CD8-positive, alpha-beta T cell (primary cell): ENCODE measurements at regions of chr2 and their contacts with region 1.

Region 1: DNA sequence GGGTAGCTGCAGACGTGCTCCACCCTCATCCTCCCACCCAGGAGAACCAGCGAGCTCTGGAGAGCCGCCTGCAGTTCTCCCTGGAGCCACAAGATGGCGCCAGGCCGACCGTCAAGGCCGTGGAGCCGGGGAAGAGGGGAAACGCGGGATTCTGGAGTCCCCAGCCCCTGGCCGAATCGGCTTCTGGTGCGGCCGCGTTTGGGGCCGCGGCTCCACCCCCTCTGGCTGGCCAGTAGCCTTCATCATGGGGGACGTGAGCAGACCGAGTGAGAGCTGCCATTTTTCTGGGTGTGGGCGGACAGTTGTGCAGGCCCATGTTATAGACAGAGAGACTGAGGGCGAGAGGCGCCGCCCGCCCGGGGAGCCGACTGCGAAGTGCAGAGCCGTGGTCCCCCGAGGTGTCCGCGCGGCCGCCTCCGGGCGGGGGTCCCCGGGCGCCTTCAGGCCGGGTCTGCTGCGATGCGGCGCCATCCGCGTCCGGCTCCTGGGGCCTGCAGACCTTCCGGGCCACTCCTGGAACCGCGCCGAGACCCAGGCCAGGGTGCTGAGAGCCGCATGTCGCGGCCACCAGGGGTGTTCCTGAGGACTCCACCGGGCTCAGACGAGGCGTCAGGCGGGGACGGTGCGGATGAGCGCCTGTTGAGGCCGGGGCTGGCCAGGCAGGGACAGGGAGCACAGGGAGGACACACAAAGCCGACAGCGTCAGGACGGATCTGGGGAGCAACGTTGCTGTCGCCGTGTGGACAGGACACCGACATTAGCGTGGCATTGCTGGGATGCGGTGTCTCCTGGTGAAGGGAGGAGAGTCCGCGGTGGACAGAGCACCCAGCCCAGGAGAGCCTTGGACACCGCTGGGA is 418.2 kb upstream of the HS6ST1 start:
- DNase-seq: peak; percentile 16 to 63 (median 51)
- ATAC-seq: peak; percentile 31
- H3K4me3 ChIP-seq: no peak overlapping the region
- H3K4me3 Mint-ChIP-seq: peak overlapping the region; percentile 26
- H3K27ac ChIP-seq: no peak overlapping the region
- H3K27ac Mint-ChIP-seq: no peak overlapping the region
- H3K4me1 ChIP-seq: peaks cover 6% of the 10 kb centered on the region
- H3K4me1 Mint-ChIP-seq: peaks cover 7% of the 10 kb centered on the region
- H3K27me3 ChIP-seq: peaks cover 0 to 2% of the 10 kb centered on the region in 2 experiments
- H3K27me3 Mint-ChIP-seq: peaks cover 15% of the 10 kb centered on the region
- CTCF ChIP-seq: peak; percentile 73

Region 2: DNA sequence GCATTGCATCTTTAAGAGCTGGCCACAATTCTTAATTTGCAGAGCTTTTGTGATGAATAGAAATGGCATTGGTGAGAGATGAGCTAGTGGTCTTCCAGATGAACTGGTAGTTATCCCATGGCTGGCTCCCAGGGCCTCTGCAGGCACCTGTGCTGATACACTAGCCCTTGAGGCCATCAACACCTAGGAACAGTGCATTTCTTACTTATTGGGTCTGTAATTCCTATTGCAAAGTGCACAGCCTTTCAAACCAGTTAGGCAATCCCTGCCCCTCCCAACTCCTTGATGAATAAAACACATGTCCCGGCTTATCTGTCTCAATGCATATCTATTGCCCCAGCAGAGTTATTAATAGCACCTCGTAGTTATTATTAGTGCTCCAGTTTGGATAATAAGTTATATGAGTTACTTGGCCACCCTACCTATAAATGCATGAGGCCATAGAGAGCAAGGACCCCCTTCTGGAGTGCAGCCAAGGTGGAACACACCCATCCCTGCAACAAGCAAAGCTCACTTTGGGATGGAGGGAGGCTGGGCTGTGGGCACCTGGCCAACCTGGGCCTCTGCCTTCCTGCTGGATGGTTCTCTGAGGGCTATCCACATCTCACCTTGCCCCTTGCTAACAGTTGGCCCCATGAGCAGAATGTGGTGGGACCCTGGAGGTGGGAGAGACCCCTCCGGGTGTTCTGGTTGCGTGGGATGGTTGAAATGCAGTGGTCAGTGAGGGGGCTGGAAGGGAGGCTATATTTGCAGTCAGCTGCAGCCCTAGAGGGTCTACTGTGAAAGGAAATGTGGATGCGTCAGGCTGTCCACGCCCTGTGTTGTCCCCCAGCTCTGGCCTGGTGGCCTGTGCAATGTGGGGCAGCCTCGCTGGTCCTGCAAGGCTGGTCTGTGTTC is 37.7 kb after region 1 on chr2:
- CTCF ChIA-PET with region 1: no interaction called
- POLR2A ChIA-PET with region 1: no interaction called
- intact Hi-C with region 1: no loop called
- DNase-seq: peak in 1 of 9 experiments; percentile 29
- ATAC-seq: no peak
- H3K4me3 ChIP-seq: no peak overlapping the region
- H3K4me3 Mint-ChIP-seq: no peak overlapping the region
- H3K27ac ChIP-seq: no peak overlapping the region
- H3K27ac Mint-ChIP-seq: no peak overlapping the region
- H3K4me1 ChIP-seq: no peaks in the 10 kb centered on the region
- H3K4me1 Mint-ChIP-seq: no peaks in the 10 kb centered on the region
- H3K27me3 ChIP-seq: no peaks in the 10 kb centered on the region
- H3K27me3 Mint-ChIP-seq: no peaks in the 10 kb centered on the region
- CTCF ChIP-seq: no peak

Region 3: DNA sequence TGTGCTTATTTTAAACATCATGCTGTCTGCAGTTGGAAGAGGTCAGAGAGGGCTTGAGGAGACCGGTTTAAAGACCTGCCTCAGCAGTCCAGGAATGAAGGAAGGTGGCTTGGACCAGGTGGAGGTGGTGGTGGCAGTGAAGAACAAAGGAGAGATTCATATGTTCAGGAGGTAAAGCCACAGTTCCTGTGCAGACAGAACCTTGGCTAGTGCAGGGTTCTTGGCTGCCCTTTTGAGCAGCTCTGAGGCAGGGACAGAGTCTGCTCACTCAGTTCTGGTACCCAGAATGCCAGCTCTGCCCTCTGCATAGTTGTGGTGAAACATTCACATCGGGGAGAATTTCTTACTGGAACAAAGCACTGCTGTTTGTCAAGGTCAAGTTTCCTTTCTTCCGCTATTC is 251.4 kb after region 1 on chr2:
- CTCF ChIA-PET with region 1: no interaction called
- POLR2A ChIA-PET with region 1: no interaction called
- intact Hi-C with region 1: no loop called
- DNase-seq: no peak
- ATAC-seq: no peak
- H3K4me3 ChIP-seq: no peak overlapping the region
- H3K4me3 Mint-ChIP-seq: no peak overlapping the region
- H3K27ac ChIP-seq: no peak overlapping the region
- H3K27ac Mint-ChIP-seq: no peak overlapping the region
- H3K4me1 ChIP-seq: no peaks in the 10 kb centered on the region
- H3K4me1 Mint-ChIP-seq: no peaks in the 10 kb centered on the region
- H3K27me3 ChIP-seq: no peaks in the 10 kb centered on the region
- H3K27me3 Mint-ChIP-seq: no peaks in the 10 kb centered on the region
- CTCF ChIP-seq: no peak

Region 4: GRCh38 chr2:129748653-129749052 is 1011.7 kb after region 1 on chr2:
- CTCF ChIA-PET with region 1: no interaction called
- POLR2A ChIA-PET with region 1: no interaction called
- intact Hi-C with region 1: loop called in 1 of 2 experiments (anchors 5 kb)
- DNase-seq: peak in 1 of 9 experiments; percentile 32
- ATAC-seq: no peak
- H3K4me3 ChIP-seq: no peak overlapping the region
- H3K4me3 Mint-ChIP-seq: no peak overlapping the region
- H3K27ac ChIP-seq: no peak overlapping the region
- H3K27ac Mint-ChIP-seq: no peak overlapping the region
- H3K4me1 ChIP-seq: no peaks in the 10 kb centered on the region
- H3K4me1 Mint-ChIP-seq: peaks cover 2% of the 10 kb centered on the region
- H3K27me3 ChIP-seq: peaks cover 0 to 2% of the 10 kb centered on the region in 2 experiments
- H3K27me3 Mint-ChIP-seq: no peaks in the 10 kb centered on the region
- CTCF ChIP-seq: no peak

Region 5: GRCh38 chr2:129923265-129924091 is 1186.6 kb after region 1 on chr2:
- CTCF ChIA-PET with region 1: no interaction called
- POLR2A ChIA-PET with region 1: no interaction called
- intact Hi-C with region 1: loop called in 1 of 2 experiments (anchors 5 kb)
- DNase-seq: peak in 1 of 9 experiments; percentile 21
- ATAC-seq: no peak
- H3K4me3 ChIP-seq: no peak overlapping the region
- H3K4me3 Mint-ChIP-seq: peak overlapping the region; percentile 1
- H3K27ac ChIP-seq: no peak overlapping the region
- H3K27ac Mint-ChIP-seq: no peak overlapping the region
- H3K4me1 ChIP-seq: no peaks in the 10 kb centered on the region
- H3K4me1 Mint-ChIP-seq: peaks cover 4% of the 10 kb centered on the region
- H3K27me3 ChIP-seq: peaks cover 0 to 3% of the 10 kb centered on the region in 2 experiments
- H3K27me3 Mint-ChIP-seq: peaks cover 31% of the 10 kb centered on the region
- CTCF ChIP-seq: no peak

Region 6: GRCh38 chr2:130332271-130333073 is 1595.6 kb after region 1 on chr2:
- CTCF ChIA-PET with region 1: no interaction called
- POLR2A ChIA-PET with region 1: no interaction called
- intact Hi-C with region 1: loop called (anchors 2 to 5 kb)
- DNase-seq: peak; percentile 48 to 80 (median 72)
- ATAC-seq: peak; percentile 87
- H3K4me3 ChIP-seq: no peak overlapping the region
- H3K4me3 Mint-ChIP-seq: peak overlapping the region; percentile 65
- H3K27ac ChIP-seq: no peak overlapping the region
- H3K27ac Mint-ChIP-seq: no peak overlapping the region
- H3K4me1 ChIP-seq: peaks cover 6% of the 10 kb centered on the region
- H3K4me1 Mint-ChIP-seq: peaks cover 8% of the 10 kb centered on the region
- H3K27me3 ChIP-seq: peaks cover 0 to 4% of the 10 kb centered on the region in 2 experiments
- H3K27me3 Mint-ChIP-seq: peaks cover 27% of the 10 kb centered on the region
- CTCF ChIP-seq: peak; percentile 87